Right ventricle myocardium inferior (tissue), 1 donor: ENCODE measurements at regions of chr20 and their contacts with region 1.

Region 1: GRCh38 chr20:23228912-23229311 is 121.7 kb upstream of the NXT1 start:
- DNase-seq: no peak
- ATAC-seq: no peak

Region 2: DNA sequence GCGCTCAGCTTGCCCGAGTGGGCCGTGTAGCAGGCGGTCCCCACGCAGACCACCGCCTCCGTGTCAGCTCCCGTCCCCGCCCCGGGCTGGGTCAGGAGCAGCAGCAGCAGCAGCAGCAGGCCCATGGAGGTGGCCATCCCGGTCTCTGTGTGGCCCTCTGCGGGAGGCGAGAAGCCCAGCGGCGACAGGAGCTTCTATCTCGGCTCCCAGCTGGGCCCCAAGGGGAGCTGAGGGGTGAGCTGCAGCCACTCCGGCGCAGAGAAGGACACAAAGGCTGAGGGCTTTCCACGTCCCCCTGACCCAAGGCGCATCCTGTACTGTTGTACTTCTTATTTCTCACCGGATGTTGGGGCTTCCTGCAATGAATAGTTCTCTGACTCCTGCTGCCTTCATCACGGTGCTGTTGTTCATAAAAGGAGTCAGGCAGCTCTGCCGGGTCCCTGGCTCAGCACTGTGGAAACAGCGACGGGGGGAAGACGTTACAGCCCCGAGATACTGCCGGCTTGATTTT is 142.8 kb before region 1 on chr20 and contains the start of gene CD93:
- intact Hi-C with region 1: no loop called
- DNase-seq: peak; percentile 79
- ATAC-seq: peak; percentile 62
- total RNA-seq, gene CD93: 43.5 TPM

Region 3: DNA sequence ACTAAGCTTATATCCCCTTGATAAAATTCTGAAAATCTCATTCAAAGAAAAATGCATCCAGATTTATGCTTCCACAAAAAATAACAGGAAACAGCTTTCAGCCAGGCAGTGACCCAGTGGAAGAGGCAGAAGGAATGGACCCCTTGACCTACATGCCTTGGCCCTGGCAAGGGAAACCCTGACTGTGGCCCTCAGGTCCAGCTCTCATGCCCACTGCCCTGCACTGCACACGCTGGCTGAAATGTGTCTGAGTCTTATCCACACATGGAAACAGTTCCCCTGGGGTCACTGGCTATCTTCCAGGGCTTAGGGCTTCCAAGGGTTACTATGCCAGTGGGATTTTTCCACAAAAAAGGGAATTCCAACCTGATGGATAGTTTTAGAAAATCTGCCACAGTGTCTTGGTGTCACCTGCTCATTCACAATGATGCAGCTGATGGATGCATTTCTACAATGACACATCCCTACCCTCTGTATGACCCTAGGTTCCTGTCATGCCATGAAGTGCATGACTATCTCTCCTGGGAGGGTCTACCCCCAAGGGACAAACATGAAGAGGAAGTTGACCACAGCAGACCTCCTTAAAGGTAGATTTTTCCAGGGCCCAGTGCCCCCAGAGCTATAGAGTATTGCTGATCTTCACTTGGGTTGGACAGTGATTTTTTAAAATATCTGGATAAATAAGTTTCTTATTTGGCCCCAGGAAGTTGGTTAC is 20.9 kb before region 1 on chr20:
- intact Hi-C with region 1: loop called (anchors 2 kb)
- DNase-seq: no peak
- ATAC-seq: no peak